T-cell (primary cell): ENCODE measurements at regions of chr3 and their contacts with region 1.

Region 1: DNA sequence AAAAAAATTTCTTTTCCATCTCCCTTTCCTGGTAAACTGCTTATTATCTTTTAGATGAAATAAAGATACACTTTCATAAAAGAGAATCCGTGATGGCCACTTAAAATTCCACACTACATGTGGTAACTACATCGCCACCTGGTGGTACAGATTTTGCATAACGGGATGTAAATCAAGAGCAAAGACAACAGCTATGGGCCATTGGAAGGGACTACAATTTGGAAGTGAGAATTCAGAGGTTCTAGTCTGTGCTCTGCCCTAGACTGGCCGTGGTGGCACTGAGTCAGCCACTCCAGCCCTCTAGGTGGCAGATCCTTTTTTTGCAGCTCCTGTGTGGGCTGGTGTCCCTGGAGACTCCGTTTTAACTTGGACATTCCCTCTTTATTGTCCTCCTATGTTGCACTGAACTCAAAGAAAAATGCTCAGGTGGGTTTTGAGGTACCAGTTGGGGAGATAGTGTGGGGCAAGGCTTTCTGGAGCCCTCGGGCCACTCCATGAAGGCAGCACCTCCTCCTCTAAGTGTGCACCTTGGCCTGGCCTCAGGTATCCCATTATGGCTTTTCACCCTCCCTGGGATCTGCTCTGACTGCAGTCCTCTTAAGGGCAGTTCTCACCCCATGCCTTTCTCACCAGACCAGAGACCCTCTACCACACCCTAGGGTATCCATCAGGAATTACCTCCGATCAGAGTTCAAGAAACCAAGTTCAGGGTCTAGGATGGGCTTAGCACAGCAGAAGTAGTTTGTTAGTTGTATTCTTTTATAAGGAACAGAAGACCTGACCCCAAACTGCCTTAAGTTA is 54.9 kb downstream of the SPSB4 start:
- DNase-seq: peak in 32 of 35 experiments; percentile 10 to 81 (median 47)
- ATAC-seq: peak in 2 of 4 experiments; percentile 50 to 55
- H3K4me3 ChIP-seq: no peak overlapping the region
- H3K4me3 Mint-ChIP-seq: no peak overlapping the region
- H3K27ac ChIP-seq: no peak overlapping the region
- H3K27ac Mint-ChIP-seq: no peak overlapping the region
- H3K4me1 ChIP-seq: no peaks in the 10 kb centered on the region
- H3K4me1 Mint-ChIP-seq: no peaks in the 10 kb centered on the region
- H3K27me3 ChIP-seq: peaks cover 0 to 4% of the 10 kb centered on the region in 2 experiments
- H3K27me3 Mint-ChIP-seq: no peaks in the 10 kb centered on the region

Region 2: DNA sequence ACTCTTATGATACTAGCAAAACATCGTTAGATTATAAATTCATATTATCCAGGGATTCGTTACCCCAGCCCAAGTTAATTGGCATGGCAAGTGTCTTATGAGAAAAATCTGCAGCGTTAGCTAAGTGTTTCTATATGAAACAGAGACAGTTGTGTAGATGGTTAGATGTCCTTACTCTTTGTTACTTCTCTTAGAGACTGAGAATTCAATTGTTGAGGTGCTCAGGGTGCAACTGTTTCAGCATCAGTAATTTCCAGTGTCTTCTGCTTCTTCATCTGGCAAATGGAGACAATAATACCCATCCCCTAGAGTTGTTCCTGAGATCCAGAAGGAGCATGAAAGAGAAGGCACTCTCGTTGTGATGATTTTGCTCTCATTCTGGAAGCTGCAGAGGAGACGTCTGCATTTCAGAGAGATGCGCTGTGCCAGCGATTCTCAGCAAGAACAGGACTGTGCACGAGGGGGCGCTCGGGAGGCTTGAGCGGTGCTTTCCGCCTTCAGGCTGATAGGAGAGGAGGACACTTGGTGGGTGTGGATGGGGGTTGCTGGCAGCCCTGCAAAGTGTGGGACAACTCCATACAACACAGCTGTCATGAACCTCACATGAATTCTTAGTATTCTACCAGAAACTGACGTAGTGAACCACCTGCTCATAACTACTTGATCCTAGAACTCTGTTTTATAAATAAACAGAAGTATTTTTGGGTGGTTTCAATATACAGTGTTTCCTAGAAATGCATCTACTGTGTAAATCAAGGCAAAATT is 94.6 kb before region 1 on chr3:
- CTCF ChIA-PET with region 1: interaction called, 3 to 12 read pairs
- POLR2A ChIA-PET with region 1: no interaction called
- DNase-seq: peak; percentile 44 to 84 (median 73)
- ATAC-seq: peak; percentile 73 to 98 (median 78)
- H3K4me3 ChIP-seq: no peak overlapping the region
- H3K4me3 Mint-ChIP-seq: no peak overlapping the region
- H3K27ac ChIP-seq: no peak overlapping the region
- H3K27ac Mint-ChIP-seq: no peak overlapping the region
- H3K4me1 ChIP-seq: peaks cover 0 to 5% of the 10 kb centered on the region in 2 experiments
- H3K4me1 Mint-ChIP-seq: peaks cover 6 to 7% (median 6%) of the 10 kb centered on the region in 3 donors
- H3K27me3 ChIP-seq: peaks cover 0 to 12% of the 10 kb centered on the region in 2 experiments
- H3K27me3 Mint-ChIP-seq: peaks cover 14 to 29% of the 10 kb centered on the region in 2 donors

Region 3: DNA sequence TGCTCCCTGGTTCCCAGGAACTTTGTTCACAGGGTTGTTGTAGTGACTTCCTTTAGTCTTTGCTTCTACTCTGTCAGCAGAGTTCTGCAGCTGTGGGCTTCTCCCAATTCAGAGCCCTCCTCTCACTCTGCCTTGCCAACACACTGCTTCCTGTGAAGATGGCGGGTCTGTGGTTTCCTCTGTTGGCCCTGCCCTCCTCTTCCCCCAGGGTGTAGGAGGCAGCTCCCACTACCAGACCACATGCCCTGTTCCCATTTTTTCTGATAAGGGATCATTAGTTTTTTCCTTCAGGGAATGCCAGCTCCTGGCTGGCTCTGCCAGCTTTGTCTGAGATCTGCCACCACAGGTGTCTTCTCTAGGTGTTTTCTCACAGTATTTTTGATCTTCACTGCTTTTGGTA is 42.2 kb before region 1 on chr3:
- CTCF ChIA-PET with region 1: no interaction called
- POLR2A ChIA-PET with region 1: no interaction called
- DNase-seq: no peak
- ATAC-seq: no peak
- H3K4me3 ChIP-seq: no peak overlapping the region
- H3K4me3 Mint-ChIP-seq: no peak overlapping the region
- H3K27ac ChIP-seq: no peak overlapping the region
- H3K27ac Mint-ChIP-seq: no peak overlapping the region
- H3K4me1 ChIP-seq: peaks cover 0 to 6% of the 10 kb centered on the region in 2 experiments
- H3K4me1 Mint-ChIP-seq: peaks cover 0 to 6% (median 3%) of the 10 kb centered on the region in 3 donors
- H3K27me3 ChIP-seq: no peaks in the 10 kb centered on the region
- H3K27me3 Mint-ChIP-seq: peaks cover 0 to 3% of the 10 kb centered on the region in 2 donors